Activated CD4-positive, alpha-beta T cell treated with anti-CD3 and anti-CD28 coated beads, Interleukin-2, amount 10 ng/mL, durations not matched to agents 24 days and 14 days (primary cell): ENCODE measurements at regions of chr3 and their contacts with region 1.

Region 1: DNA sequence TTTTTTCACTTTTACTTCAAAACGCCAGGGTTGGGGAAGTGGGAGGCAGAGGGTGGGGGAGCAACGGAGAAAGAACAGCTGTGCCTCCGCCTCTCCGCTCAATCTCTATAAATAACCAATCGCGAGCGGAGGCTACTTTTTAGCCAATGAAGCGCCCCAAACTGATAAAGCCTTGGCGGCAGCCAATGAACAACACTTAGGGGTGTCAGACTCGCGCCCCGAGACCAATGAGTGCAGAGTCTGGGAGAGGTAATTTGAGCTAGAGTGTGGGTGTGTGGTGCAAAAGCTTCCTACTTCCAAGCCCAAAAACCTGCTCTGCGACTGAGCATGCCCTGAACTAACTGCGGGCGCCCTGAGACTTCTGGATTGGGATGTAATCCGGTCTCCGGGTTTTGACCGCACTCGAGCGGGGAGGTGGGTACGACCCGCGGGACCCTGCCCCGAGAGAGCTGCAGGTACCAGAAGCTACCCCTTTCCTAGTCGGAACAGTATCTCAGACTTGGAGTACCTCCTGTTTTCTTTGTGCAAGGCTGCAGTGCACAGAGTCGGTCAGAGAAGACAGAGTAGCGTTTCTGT is 800 bp upstream of the RAP2B start:
- DNase-seq: peak; percentile 97
- H3K4me3 Mint-ChIP-seq: peak overlapping the region; percentile 91
- H3K27ac Mint-ChIP-seq: peak overlapping the region; percentile 99
- H3K4me1 Mint-ChIP-seq: peaks cover 34% of the 10 kb centered on the region
- H3K27me3 Mint-ChIP-seq: no peaks in the 10 kb centered on the region

Region 2: GRCh38 chr3:153043729-153044328 is 117.4 kb before region 1 on chr3:
- intact Hi-C with region 1: loop called (anchors 1 kb)
- DNase-seq: no peak
- H3K4me3 Mint-ChIP-seq: no peak overlapping the region
- H3K27ac Mint-ChIP-seq: no peak overlapping the region
- H3K4me1 Mint-ChIP-seq: peaks cover 6% of the 10 kb centered on the region
- H3K27me3 Mint-ChIP-seq: no peaks in the 10 kb centered on the region

Region 3: GRCh38 chr3:153209596-153209995 is 48.4 kb after region 1 on chr3:
- intact Hi-C with region 1: no loop called
- DNase-seq: peak; percentile 49
- H3K4me3 Mint-ChIP-seq: no peak overlapping the region
- H3K27ac Mint-ChIP-seq: no peak overlapping the region
- H3K4me1 Mint-ChIP-seq: peaks cover 14% of the 10 kb centered on the region
- H3K27me3 Mint-ChIP-seq: no peaks in the 10 kb centered on the region

Region 4: DNA sequence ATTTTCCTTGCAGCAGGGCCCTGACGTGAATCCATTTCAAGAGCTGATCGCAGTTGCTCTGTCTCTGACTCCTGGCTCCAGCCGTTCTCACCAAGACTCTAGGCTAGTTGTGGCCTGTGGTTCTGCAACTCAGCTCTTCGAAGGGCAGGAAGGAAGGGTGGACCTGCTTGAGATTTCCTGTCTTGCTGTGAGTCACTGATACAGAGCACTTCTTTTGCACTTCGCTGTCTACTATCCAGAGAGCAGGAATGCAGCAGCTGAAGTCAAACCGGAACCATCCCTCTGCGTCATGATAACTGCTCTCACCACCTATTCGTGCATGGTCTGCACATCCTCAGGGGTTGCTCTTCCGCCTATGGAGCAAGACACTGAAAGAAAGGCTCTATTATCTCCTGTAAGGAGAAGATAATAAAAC is 60.5 kb after region 1 on chr3:
- intact Hi-C with region 1: loop called (anchors 1 kb)
- DNase-seq: peak; percentile 93
- H3K4me3 Mint-ChIP-seq: peak overlapping the region; percentile 73
- H3K27ac Mint-ChIP-seq: peak overlapping the region; percentile 97
- H3K4me1 Mint-ChIP-seq: peaks cover 46% of the 10 kb centered on the region
- H3K27me3 Mint-ChIP-seq: no peaks in the 10 kb centered on the region

Region 5: DNA sequence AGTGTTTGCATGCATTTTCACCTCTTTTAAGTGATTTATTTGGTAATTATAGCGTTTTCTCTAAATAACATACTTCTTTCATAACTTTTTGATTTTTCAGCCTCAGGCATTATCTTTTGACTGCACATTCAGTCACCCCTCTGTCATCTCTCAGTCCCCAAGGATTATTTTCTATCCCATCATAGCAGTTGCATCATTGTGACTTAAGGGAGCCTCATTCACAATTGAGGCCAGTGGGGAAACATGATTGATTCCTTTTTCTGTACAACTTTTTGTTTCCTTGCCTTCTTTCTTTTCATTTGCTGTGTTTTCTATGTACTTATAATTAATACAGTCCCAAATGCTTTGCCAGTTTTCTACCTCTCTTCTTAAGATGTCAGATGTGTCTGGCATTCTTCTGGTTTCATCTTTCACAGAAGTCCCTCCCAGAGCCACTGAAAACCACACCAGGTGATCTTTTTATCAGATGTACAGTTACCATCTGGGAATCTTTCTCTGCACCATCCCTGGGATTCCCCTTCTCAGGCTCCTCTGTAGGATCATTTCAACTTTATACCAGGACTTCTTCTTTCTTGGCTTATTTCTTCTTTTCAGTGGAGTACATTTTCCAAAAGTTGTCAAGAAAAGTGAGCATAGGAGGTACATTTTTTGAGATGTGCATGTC is 152.2 kb after region 1 on chr3:
- intact Hi-C with region 1: no loop called
- DNase-seq: no peak
- H3K4me3 Mint-ChIP-seq: no peak overlapping the region
- H3K27ac Mint-ChIP-seq: no peak overlapping the region
- H3K4me1 Mint-ChIP-seq: peaks cover 9% of the 10 kb centered on the region
- H3K27me3 Mint-ChIP-seq: no peaks in the 10 kb centered on the region

Region 6: GRCh38 chr3:153621953-153622352 is 460.7 kb after region 1 on chr3:
- intact Hi-C with region 1: loop called (anchors 1 kb)
- DNase-seq: peak; percentile 74
- H3K4me3 Mint-ChIP-seq: peak overlapping the region; percentile 66
- H3K27ac Mint-ChIP-seq: peak overlapping the region; percentile 77
- H3K4me1 Mint-ChIP-seq: peaks cover 47% of the 10 kb centered on the region
- H3K27me3 Mint-ChIP-seq: no peaks in the 10 kb centered on the region

Region 7: GRCh38 chr3:153768561-153769469 is 607.6 kb after region 1 on chr3:
- intact Hi-C with region 1: loop called (anchors 2 kb)
- DNase-seq: peak; percentile 84
- H3K4me3 Mint-ChIP-seq: no peak overlapping the region
- H3K27ac Mint-ChIP-seq: no peak overlapping the region
- H3K4me1 Mint-ChIP-seq: peaks cover 4% of the 10 kb centered on the region
- H3K27me3 Mint-ChIP-seq: peaks cover 19% of the 10 kb centered on the region